ENCODE measurements at regions of chr15 and their contacts with region 1.

Region 1: DNA sequence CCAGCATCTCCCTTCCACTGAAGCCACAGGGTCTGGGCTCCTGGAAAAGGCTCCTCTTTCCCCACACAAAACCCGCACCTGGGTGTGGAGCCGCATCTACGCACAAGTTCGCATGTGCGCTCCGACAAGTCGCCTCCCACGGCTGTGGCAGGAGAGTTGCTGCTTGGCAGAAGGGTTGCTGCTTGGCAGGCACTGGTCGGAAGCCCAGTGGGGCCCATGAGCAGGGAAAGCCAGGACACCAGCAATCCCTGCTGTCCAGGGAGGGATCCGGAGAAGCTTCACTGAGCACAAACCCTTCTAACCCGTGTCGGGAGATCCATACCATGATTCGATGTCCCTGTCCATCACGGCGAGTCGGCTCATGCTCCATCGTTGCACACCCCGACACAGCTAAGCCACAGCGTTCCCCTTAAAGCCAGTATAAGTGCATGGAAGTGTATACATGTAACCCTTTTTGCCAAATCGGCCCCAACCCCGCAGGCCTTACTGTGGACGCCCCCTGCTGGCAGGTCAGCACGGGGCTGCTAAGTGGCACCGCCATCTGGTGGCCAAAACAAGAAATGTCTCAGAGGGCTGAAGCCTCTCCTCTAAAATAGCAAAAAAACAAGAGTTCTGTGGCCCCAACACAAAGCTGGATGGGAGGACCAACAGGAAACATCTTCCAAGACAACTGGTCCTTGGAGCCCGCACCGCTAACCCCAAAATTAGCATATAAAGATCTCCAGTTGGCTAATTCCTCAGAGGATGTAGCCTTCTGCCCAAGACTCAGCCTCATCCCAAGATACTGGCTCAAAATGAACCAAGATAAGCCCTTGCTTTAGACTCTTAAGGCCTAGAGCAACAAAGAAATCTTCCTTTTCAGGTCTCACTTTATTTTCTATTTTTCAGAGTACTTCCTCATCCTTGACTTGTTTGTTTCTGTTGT is 8.3 kb downstream of the ANKRD63 start:
- DNase-seq: no peak
- H3K4me3 ChIP-seq: no peak overlapping the region
- H3K27me3 ChIP-seq: peaks cover 6% of the 10 kb centered on the region; the same call in 1 of the 2 replicates
- CTCF ChIP-seq: peak; percentile 100

Region 2: GRCh38 chr15:40044717-40045571 is 229.7 kb before region 1 on chr15:
- CTCF ChIA-PET with region 1: interaction called, 73 read pairs
- POLR2A ChIA-PET with region 1: no interaction called
- DNase-seq: no peak
- H3K4me3 ChIP-seq: no peak overlapping the region
- H3K27me3 ChIP-seq: no peaks in the 10 kb centered on the region
- CTCF ChIP-seq: peak; percentile 97

Region 3: DNA sequence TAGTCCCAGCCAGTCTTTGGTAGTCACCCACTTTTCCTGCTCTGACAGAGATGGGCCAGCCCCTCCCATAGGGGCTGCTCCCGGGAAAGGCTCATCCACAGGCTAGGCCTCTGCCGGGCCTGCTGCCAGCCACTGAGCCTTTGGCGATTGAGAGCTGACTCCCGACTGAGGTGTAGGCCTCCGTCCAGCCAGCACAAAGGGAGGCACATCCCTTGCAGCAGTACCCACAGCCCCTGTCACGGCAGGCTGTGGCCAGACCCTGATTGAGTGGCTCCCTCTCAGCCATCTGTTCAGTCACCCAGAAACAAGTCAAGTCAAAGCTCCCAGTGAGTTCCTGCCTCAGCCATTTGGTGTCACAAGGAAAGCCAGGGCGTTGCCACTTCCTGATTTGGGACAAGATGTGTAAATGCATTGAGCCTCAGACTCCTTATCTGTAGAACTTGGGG is 42.0 kb before region 1 on chr15:
- CTCF ChIA-PET with region 1: interaction called, 63 read pairs
- POLR2A ChIA-PET with region 1: no interaction called
- DNase-seq: no peak
- H3K4me3 ChIP-seq: no peak overlapping the region
- H3K27me3 ChIP-seq: no peaks in the 10 kb centered on the region
- CTCF ChIP-seq: no peak

Region 4: DNA sequence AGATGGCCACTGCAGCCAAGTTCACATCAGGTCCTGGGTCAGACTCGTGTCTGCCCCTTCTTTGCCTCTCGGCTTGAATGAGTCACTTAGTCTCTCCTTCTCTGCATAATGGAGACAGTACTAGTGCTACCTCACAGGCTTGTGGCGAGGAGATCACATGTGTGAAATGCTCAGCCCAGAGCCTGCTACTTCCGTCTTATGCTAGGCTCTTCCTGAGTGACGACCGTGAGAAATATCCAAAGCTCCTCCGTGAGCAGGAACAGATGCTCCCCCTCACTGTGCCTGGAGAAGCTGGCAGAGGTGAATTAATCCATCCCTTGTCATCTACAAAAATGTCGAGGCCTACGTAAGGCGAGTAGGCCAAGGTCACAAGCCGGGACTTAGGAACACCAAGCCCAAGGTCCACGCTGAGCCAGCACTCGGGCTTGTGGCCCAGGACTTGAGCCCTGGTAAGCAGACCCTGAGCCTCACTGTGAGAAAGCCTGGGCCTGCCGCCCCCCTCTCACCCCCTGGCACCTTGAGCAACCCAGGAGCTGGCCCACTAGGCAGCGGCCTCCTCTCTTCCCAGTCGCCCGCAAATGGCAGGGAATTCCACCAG is 17.9 kb before region 1 on chr15:
- CTCF ChIA-PET with region 1: interaction called, 74 read pairs
- POLR2A ChIA-PET with region 1: no interaction called
- DNase-seq: no peak
- H3K4me3 ChIP-seq: no peak overlapping the region
- H3K27me3 ChIP-seq: peaks cover 35% of the 10 kb centered on the region
- CTCF ChIP-seq: no peak

Region 5: DNA sequence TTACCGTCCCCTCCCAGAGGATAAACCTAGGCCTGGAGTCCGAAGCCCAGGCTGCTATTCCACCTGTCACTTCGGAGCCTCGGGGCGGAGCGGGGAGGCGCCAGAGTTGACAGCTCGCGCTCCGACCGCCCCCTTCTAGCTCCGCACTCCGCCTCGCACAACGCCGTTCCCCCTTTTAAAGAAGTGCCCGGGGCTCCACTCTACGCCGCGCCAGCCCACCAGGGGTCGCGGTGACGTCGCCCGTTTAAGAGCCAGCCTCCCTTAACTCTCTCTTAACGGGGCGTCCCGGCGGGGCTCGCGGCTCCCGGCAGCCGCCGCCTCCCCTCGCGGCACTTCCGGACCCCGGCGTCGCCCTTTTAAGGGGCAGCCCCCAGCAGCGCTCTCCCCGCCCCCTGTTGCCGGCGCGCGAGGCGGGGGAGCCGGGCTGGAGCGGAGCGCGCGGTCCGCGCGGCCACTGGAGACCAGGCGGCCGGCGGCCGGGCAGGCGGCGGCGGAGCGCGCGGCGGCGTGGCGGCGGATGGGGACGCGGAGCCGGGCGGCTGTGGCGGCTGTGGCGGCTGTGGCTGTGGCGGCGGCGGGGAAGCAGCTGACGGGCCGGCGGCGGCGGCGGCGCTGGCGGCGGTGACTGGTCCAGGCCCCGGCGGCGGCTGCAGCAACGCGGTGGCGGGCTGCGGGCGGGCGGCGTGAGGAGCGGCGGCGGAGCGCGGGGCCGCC is 48.8 kb after region 1 on chr15 and contains the start of gene INAFM2:
- CTCF ChIA-PET with region 1: interaction called, 29 read pairs
- POLR2A ChIA-PET with region 1: no interaction called
- DNase-seq: peak; percentile 62
- H3K4me3 ChIP-seq: peak within 1 kb of the TSS; percentile 72
- H3K27me3 ChIP-seq: no peaks in the 10 kb centered on the region; the same call in 1 of the 2 replicates
- CTCF ChIP-seq: peak; percentile 64
- polyA plus RNA-seq, gene INAFM2: 7.3 and 12.8 TPM in 2 replicates

Region 6: GRCh38 chr15:40367686-40368611 is 93.3 kb after region 1 on chr15:
- CTCF ChIA-PET with region 1: interaction called, 15 read pairs
- POLR2A ChIA-PET with region 1: no interaction called
- DNase-seq: no peak
- H3K4me3 ChIP-seq: peak overlapping the region; percentile 25
- H3K27me3 ChIP-seq: no peaks in the 10 kb centered on the region
- CTCF ChIP-seq: peak; percentile 59